Calu3 (cell line): ENCODE measurements at regions of chr7 and their contacts with region 1.

Region 1: GRCh38 chr7:1579481-1580421 is 9.9 kb upstream of the PSMG3 start:
- DNase-seq: peak; percentile 91
- H3K4me3 Mint-ChIP-seq: no peak overlapping the region
- H3K27ac Mint-ChIP-seq: no peak overlapping the region
- H3K4me1 Mint-ChIP-seq: peaks cover 11% of the 10 kb centered on the region
- H3K27me3 Mint-ChIP-seq: peaks cover 62% of the 10 kb centered on the region
- CTCF ChIP-seq: peak; percentile 95

Region 2: DNA sequence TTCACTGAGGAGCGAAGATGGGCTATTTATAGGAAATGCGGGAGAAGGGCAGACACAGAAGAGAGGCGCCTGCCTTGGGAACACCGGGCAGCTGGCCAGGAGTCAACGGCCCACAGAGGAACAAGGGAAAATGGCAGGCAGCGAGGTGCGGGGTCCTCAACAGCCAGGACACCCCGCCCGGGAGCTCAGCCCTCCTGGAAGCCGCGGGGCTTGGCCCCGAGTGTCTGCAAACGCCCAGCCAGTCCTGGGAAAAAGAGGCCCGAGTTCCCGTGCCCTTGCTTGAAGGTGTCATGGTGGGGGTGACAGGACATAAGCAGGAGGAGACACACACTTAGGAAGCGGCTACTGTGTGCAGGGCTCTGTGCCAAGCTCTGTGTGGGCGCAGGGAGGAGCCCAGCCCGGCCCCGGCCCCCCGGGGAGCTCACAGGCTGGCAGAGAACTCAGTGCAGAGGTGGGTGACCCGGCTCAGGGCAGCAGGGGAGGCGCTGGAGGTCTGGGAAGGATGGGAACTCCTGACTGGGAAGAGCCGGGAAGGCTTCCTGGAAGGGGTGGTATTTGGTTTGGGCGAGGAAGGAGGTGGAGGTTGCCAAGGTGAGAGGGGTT is 170.2 kb after region 1 on chr7:
- CTCF ChIA-PET with region 1: no interaction called
- intact Hi-C with region 1: loop called (anchors 5 kb)
- DNase-seq: no peak
- H3K4me3 Mint-ChIP-seq: no peak overlapping the region
- H3K27ac Mint-ChIP-seq: no peak overlapping the region
- H3K4me1 Mint-ChIP-seq: peaks cover 43% of the 10 kb centered on the region
- H3K27me3 Mint-ChIP-seq: peaks cover 84% of the 10 kb centered on the region
- CTCF ChIP-seq: no peak